ENCODE measurements at regions of chr2 and their contacts with region 1.

Region 1: DNA sequence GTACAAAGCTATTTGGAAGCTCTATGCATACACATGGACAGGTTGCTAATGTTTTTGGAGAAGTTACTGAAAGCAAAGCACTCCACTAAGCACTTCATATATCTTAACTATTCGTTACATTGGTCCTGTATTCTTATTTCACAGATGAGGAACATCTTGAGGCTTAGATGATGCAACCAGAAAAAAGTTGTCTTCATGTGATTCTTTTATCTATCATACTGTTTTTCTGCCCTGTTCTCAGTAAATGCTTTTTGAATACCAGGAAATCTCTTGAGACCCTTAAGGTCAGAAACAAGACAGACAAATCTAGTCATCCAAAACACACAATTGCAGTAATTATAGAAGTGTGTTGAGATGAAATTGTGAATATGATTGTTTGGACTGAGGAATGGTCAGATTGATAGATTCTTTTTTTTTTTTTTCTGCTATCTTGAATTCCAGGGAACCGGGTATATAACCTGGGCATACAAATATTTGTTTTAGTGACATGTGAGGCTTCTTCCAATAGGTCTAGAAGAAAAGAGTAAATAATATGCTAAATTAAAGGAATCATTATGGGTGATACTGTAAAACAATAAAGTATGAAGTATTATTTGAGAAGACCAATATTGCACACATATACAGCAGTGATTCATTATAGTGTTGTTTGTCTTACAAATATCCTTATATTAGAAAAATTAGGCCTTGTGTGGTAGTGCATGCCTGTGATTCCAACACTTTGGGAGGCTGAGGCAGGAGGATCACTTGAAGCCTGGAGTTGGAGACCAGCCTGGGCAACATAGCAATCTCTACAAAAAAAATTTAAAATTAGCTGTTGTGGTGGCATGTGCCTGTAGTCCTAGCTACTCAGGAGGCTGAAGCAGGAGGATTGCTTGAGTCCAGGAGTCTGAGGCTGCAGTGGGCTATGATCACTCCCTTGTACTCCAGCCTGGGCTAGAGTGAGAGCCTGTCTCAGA is 33.7 kb downstream of the EHBP1 start:
- DNase-seq: no peak
- ATAC-seq: no peak
- H3K4me3 ChIP-seq: no peak overlapping the region
- H3K4me3 Mint-ChIP-seq: no peak overlapping the region
- H3K27ac ChIP-seq: no peak overlapping the region
- H3K27ac Mint-ChIP-seq: no peak overlapping the region
- H3K4me1 ChIP-seq: no peaks in the 10 kb centered on the region
- H3K4me1 Mint-ChIP-seq: peaks cover 28 to 50% (median 33%) of the 10 kb centered on the region in 3 donors
- H3K27me3 ChIP-seq: no peaks in the 10 kb centered on the region
- H3K27me3 Mint-ChIP-seq: no peaks in the 10 kb centered on the region

Region 2: GRCh38 chr2:62287282-62287681 is 452.0 kb before region 1 on chr2:
- CTCF ChIA-PET with region 1: no interaction called
- POLR2A ChIA-PET with region 1: interaction called in 1 of 2 experiments, 15 read pairs
- DNase-seq: no peak
- ATAC-seq: no peak
- H3K4me3 ChIP-seq: no peak overlapping the region
- H3K4me3 Mint-ChIP-seq: no peak overlapping the region
- H3K27ac ChIP-seq: no peak overlapping the region
- H3K27ac Mint-ChIP-seq: no peak overlapping the region
- H3K4me1 ChIP-seq: peaks cover 0 to 12% of the 10 kb centered on the region in 2 experiments
- H3K4me1 Mint-ChIP-seq: peaks cover 10 to 13% (median 10%) of the 10 kb centered on the region in 3 donors
- H3K27me3 ChIP-seq: no peaks in the 10 kb centered on the region
- H3K27me3 Mint-ChIP-seq: no peaks in the 10 kb centered on the region

Region 3: GRCh38 chr2:62596061-62596921 is 143.0 kb before region 1 on chr2:
- CTCF ChIA-PET with region 1: no interaction called
- POLR2A ChIA-PET with region 1: no interaction called
- DNase-seq: no peak
- ATAC-seq: no peak
- H3K4me3 ChIP-seq: no peak overlapping the region
- H3K4me3 Mint-ChIP-seq: no peak overlapping the region
- H3K27ac ChIP-seq: no peak overlapping the region
- H3K27ac Mint-ChIP-seq: no peak overlapping the region
- H3K4me1 ChIP-seq: no peaks in the 10 kb centered on the region
- H3K4me1 Mint-ChIP-seq: no peaks in the 10 kb centered on the region
- H3K27me3 ChIP-seq: no peaks in the 10 kb centered on the region
- H3K27me3 Mint-ChIP-seq: peaks cover 4 to 12% of the 10 kb centered on the region in 2 donors

Region 4: GRCh38 chr2:62641410-62641843 is 97.8 kb before region 1 on chr2:
- CTCF ChIA-PET with region 1: no interaction called
- POLR2A ChIA-PET with region 1: no interaction called
- DNase-seq: no peak
- ATAC-seq: no peak
- H3K4me3 ChIP-seq: no peak overlapping the region
- H3K4me3 Mint-ChIP-seq: no peak overlapping the region
- H3K27ac ChIP-seq: no peak overlapping the region
- H3K27ac Mint-ChIP-seq: no peak overlapping the region
- H3K4me1 ChIP-seq: no peaks in the 10 kb centered on the region
- H3K4me1 Mint-ChIP-seq: no peaks in the 10 kb centered on the region
- H3K27me3 ChIP-seq: no peaks in the 10 kb centered on the region
- H3K27me3 Mint-ChIP-seq: peaks cover 0 to 5% of the 10 kb centered on the region in 2 donors

Measured in T-cell (primary cell).